ENCODE measurements at regions of chr2 and their contacts with region 1.

Region 1: GRCh38 chr2:235116885-235117492 is 165.2 kb downstream of the SH3BP4 start:
- DNase-seq: peak in 1 of 2 experiments; percentile 20
- H3K4me3 ChIP-seq: no peak overlapping the region
- H3K4me3 Mint-ChIP-seq: no peak overlapping the region
- H3K27ac Mint-ChIP-seq: no peak overlapping the region
- H3K4me1 ChIP-seq: no peaks in the 10 kb centered on the region
- H3K4me1 Mint-ChIP-seq: no peaks in the 10 kb centered on the region
- H3K27me3 ChIP-seq: no peaks in the 10 kb centered on the region
- H3K27me3 Mint-ChIP-seq: peaks cover 2% of the 10 kb centered on the region
- CTCF ChIP-seq: peak; percentile 39 to 46

Region 2: GRCh38 chr2:234550511-234551107 is 566.4 kb before region 1 on chr2:
- CTCF ChIA-PET with region 1: interaction called, 3 read pairs
- POLR2A ChIA-PET with region 1: no interaction called
- intact Hi-C with region 1: loop called (anchors 1 kb)
- DNase-seq: peak; percentile 55 to 66
- H3K4me3 ChIP-seq: no peak overlapping the region
- H3K4me3 Mint-ChIP-seq: no peak overlapping the region
- H3K27ac Mint-ChIP-seq: no peak overlapping the region
- H3K4me1 ChIP-seq: no peaks in the 10 kb centered on the region
- H3K4me1 Mint-ChIP-seq: peaks cover 4% of the 10 kb centered on the region
- H3K27me3 ChIP-seq: no peaks in the 10 kb centered on the region
- H3K27me3 Mint-ChIP-seq: peaks cover 2% of the 10 kb centered on the region
- CTCF ChIP-seq: peak; percentile 78

Measured in Caco-2 (cell line).